Transverse colon (tissue), 4 donors: ENCODE measurements at regions of chr18 and their contacts with region 1.

Region 1: DNA sequence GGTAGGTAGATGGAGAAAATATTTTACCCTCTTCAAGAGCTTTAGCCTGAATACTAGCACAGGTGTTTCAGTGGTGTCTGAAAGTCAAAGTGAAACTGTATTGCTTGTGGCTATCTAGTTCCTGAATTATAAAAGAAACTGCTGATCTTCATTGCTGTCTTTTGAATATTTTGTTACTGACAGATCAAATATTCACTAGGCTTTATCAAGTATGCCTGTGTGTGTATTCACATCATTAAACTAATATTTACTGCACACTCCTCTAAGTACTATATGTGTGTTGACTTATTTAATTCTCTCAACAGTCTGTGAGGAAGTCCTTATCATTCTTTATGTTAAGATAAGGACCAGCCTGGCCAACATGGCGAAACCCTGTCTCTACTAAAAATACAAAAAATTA is 139.6 kb downstream of the SOCS6 start:
- DNase-seq: no peak
- H3K4me3 ChIP-seq: no peak overlapping the region
- H3K27ac ChIP-seq: no peak overlapping the region
- H3K4me1 ChIP-seq: peaks cover 0 to 4% (median 0%) of the 10 kb centered on the region in 4 donors
- H3K27me3 ChIP-seq: no peaks in the 10 kb centered on the region
- CTCF ChIP-seq: no peak
- EP300 ChIP-seq: no peak
- POLR2A ChIP-seq: no peak

Region 2: GRCh38 chr18:68714609-68715496 is 1713.6 kb before region 1 on chr18 and contains the start of gene TMX3:
- in situ Hi-C with region 1: loop called in 1 of 4 experiments (anchors 25 kb)
- intact Hi-C with region 1: no loop called
- DNase-seq: peak; percentile 93
- H3K4me3 ChIP-seq: peak within 1 kb of the TSS; percentile 90 to 96 (median 96)
- H3K27ac ChIP-seq: peak within 1 kb of the TSS; percentile 83 to 88 (median 86)
- H3K4me1 ChIP-seq: peaks cover 7 to 21% (median 14%) of the 10 kb centered on the region in 4 donors
- H3K27me3 ChIP-seq: no peaks in the 10 kb centered on the region
- CTCF ChIP-seq: no peak
- EP300 ChIP-seq: no peak
- POLR2A ChIP-seq: peak; percentile 26
- total RNA-seq, gene TMX3: 13.5 to 146 (median 44.7) TPM